GM10248 (cell line): ENCODE measurements at regions of chr6 and their contacts with region 1.

Region 1: DNA sequence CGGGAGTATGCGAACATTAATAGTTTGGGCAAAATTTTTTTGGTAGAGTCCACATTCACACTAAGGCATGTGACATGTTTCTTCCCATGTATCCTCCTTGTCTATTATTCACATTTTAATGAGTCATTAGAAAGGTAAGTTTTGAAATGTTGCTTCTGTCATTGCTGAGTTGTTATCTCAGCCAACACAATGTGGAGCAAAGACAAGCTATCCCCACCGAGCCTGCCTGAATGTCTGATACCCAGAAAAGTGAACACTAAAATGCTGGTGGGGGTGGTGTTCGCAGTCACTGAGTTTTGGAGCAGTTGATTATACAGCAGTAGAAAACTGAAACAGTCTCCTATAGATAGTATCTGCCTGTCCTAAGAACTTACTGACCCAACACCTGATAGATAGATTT is 68.3 kb upstream of the ASF1A start:
- DNase-seq: no peak
- CTCF ChIP-seq: no peak

Region 2: DNA sequence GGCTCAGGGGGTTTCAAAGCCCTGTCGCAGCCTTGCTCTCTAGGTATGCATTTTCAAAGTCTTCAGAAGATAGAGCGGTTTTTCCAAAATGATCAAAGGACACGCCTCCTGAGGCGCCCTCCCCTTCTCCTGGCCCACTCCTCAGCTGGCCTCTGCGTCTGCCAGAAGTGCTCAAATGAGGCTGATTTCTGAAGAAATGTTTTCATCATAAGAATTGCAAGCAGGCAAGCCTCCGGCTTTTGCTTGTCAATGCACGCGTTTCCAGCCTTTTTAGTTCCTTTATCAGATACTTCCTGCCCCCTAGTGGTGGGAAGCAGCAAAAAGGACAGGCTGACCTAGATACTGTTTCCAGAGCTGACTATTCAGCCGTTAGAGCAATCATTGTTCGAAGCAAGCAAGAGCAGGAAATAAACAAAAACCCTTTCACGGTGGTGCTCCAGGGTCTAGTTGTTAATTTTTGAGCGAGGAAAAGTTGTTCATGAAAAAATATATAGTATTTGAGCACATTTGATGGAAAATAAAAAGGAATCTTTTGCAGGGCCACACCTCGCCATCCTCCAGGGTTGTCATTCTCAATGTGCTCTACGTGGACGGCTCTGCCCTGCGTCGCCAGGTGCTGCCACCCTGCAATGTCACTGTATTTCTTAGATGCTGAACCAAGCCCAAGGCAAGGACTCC is 25.1 kb before region 1 on chr6:
- CTCF ChIA-PET with region 1: interaction called, 20 read pairs
- POLR2A ChIA-PET with region 1: no interaction called
- DNase-seq: peak; percentile 81
- CTCF ChIP-seq: peak; percentile 90

Region 3: DNA sequence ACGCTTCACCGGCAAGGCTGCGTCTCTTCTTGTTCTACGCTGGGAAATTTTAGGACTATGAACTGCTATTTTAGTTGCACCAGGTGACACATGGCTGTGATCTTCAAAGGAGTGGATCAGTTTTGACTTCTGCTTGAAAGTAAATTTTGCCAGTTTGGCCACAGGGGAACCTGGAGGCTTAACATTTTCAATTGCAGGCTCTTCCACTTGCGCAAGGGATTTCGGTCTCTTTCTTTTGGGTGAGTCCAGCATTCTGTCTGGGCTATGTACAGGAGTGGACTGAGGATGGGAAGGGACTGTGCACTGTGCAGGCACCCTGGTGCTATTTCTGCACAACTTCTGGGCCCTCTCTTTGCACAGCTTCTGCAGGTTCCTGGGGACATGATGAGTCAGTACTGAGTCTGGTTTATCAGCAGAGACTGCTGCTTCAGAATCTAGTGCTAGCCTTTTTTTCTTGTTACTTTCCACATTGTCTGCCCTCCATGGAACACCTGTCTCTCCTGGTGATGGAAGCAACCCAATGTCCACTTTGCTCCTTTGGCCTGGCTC is 10.2 kb before region 1 on chr6:
- CTCF ChIA-PET with region 1: no interaction called
- POLR2A ChIA-PET with region 1: no interaction called
- DNase-seq: no peak
- CTCF ChIP-seq: no peak

Region 4: GRCh38 chr6:118843685-118844390 is 18.2 kb after region 1 on chr6:
- CTCF ChIA-PET with region 1: no interaction called
- POLR2A ChIA-PET with region 1: no interaction called
- DNase-seq: peak; percentile 51
- CTCF ChIP-seq: no peak

Region 5: DNA sequence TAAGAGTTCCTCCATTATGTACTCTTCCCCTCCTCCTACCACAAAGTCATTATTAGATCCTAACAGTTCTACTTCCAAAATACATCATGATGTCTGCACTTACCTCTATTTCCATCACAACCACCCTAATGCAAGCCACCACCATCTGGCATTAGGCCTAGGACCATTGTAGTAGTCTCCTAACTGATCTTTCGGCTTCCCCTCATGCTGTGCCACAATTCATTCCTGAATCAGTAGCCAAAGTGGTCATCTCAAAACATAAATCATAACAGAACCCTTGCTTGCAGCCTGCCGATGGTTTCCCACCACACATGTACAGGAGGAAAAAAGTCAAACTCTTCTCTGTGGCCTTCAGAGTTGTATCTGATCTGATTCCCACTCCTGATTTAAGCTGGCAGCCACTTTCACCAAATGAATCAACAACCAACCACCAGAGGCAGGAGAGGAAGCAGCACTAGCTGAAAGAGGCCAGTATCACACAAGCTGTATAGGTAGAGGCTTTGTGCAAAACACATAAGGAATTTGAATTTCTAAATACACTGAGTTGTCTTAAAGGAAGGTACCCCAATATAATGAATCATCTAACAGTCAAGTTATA is 226.7 kb after region 1 on chr6:
- CTCF ChIA-PET with region 1: no interaction called
- POLR2A ChIA-PET with region 1: no interaction called
- DNase-seq: no peak
- CTCF ChIP-seq: no peak